CD8-positive, alpha-beta T cell (primary cell): ENCODE measurements at regions of chr6 and their contacts with region 1.

Region 1: DNA sequence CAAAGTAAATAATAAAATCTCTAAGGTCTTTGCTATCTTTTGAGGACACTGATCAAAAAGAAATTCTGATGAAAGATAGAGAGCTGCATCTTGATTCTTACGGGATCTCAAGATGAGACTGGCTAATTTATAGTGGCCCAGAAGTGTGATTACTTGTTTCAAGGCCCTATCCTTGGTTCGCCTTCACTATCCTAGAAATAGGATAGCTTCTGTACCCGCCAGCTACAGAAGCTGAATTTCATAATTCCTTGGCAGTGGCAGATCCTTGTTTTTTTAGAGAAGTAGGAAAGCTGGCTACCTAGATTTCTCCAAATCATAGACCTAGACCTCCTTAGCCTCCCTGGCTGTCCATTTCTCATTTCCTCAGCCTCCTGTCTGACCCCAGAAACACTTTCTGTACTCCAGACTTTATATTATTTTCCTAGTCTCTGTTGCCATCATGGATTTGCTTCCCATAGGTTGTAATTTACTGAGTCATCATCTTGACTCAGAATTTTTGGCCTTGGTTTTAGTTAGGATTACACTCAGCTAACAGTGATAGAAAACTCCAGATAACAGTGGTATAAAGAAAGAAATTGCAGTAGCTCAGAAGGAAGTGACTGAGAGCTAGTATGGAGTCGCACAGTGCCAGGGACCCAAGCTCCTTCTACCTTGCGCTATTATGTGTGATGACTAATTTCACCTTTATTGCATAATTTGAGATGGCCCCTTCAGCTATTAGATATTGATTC is 27.7 kb downstream of the PHF3 start:
- DNase-seq: no peak
- ATAC-seq: no peak
- H3K4me3 ChIP-seq: no peak overlapping the region
- H3K4me3 Mint-ChIP-seq: peak overlapping the region; percentile 12
- H3K27ac ChIP-seq: no peak overlapping the region
- H3K27ac Mint-ChIP-seq: peak overlapping the region; percentile 61
- H3K4me1 ChIP-seq: peaks cover 36% of the 10 kb centered on the region
- H3K4me1 Mint-ChIP-seq: peaks cover 81% of the 10 kb centered on the region
- H3K27me3 ChIP-seq: no peaks in the 10 kb centered on the region
- H3K27me3 Mint-ChIP-seq: no peaks in the 10 kb centered on the region
- CTCF ChIP-seq: no peak

Region 2: GRCh38 chr6:63624091-63624490 is 39.2 kb before region 1 on chr6:
- CTCF ChIA-PET with region 1: no interaction called
- POLR2A ChIA-PET with region 1: no interaction called
- intact Hi-C with region 1: no loop called
- DNase-seq: no peak
- ATAC-seq: no peak
- H3K4me3 ChIP-seq: no peak overlapping the region
- H3K4me3 Mint-ChIP-seq: no peak overlapping the region
- H3K27ac ChIP-seq: no peak overlapping the region
- H3K27ac Mint-ChIP-seq: no peak overlapping the region
- H3K4me1 ChIP-seq: no peaks in the 10 kb centered on the region
- H3K4me1 Mint-ChIP-seq: no peaks in the 10 kb centered on the region
- H3K27me3 ChIP-seq: peaks cover 0 to 11% of the 10 kb centered on the region in 2 experiments
- H3K27me3 Mint-ChIP-seq: peaks cover 21% of the 10 kb centered on the region
- CTCF ChIP-seq: no peak

Region 3: GRCh38 chr6:63649269-63649668 is 14.0 kb before region 1 on chr6:
- CTCF ChIA-PET with region 1: no interaction called
- POLR2A ChIA-PET with region 1: no interaction called
- intact Hi-C with region 1: loop called in 1 of 2 experiments (anchors 2 kb)
- DNase-seq: no peak
- ATAC-seq: no peak
- H3K4me3 ChIP-seq: no peak overlapping the region
- H3K4me3 Mint-ChIP-seq: no peak overlapping the region
- H3K27ac ChIP-seq: no peak overlapping the region
- H3K27ac Mint-ChIP-seq: no peak overlapping the region
- H3K4me1 ChIP-seq: peaks cover 71% of the 10 kb centered on the region
- H3K4me1 Mint-ChIP-seq: peaks cover 75% of the 10 kb centered on the region
- H3K27me3 ChIP-seq: no peaks in the 10 kb centered on the region
- H3K27me3 Mint-ChIP-seq: no peaks in the 10 kb centered on the region
- CTCF ChIP-seq: no peak

Region 4: GRCh38 chr6:63677282-63677681 is 14.0 kb after region 1 on chr6:
- CTCF ChIA-PET with region 1: no interaction called
- POLR2A ChIA-PET with region 1: no interaction called
- intact Hi-C with region 1: loop called in 1 of 2 experiments (anchors 2 kb)
- DNase-seq: no peak
- ATAC-seq: no peak
- H3K4me3 ChIP-seq: no peak overlapping the region
- H3K4me3 Mint-ChIP-seq: no peak overlapping the region
- H3K27ac ChIP-seq: no peak overlapping the region
- H3K27ac Mint-ChIP-seq: no peak overlapping the region
- H3K4me1 ChIP-seq: peaks cover 48% of the 10 kb centered on the region
- H3K4me1 Mint-ChIP-seq: peaks cover 51% of the 10 kb centered on the region
- H3K27me3 ChIP-seq: no peaks in the 10 kb centered on the region
- H3K27me3 Mint-ChIP-seq: no peaks in the 10 kb centered on the region
- CTCF ChIP-seq: no peak